Activated CD4-positive, alpha-beta T cell treated with anti-CD3 and anti-CD28 coated beads, Interleukin-2, amount 10 ng/mL, durations not matched to agents 7 days and 5 days (primary cell): ENCODE measurements at regions of chr12 and their contacts with region 1.

Region 1: DNA sequence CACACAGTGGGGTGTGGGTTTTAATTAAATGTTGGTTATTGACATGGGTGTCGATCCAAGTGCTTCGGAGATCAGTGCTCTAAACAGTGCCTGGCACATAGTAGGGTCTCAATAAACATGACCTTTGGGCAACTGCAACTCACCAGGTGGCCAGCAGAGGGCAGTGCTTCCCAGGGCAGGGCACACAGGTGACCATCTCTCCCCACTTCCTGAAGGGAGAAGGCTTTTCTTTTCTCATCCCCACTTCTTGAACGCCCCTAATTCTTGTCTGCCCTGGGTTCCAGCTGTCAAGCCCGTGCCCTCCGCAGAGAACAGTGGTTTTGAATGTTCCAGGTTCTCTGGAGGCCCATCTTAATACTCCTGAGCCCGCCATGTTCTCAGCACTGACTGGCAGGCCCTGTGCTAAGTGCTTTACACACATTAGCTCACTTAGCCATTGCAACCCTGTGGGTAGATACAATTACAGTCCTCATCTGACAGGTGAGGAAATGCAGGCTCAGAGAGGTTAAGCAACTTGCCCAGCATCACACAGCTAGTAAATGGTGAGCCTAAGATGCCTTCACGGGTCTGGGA is 16.3 kb downstream of the RAPGEF3 start:
- DNase-seq: peak; percentile 80
- H3K4me3 Mint-ChIP-seq: no peak overlapping the region
- H3K27ac Mint-ChIP-seq: no peak overlapping the region
- H3K4me1 Mint-ChIP-seq: peaks cover 17% of the 10 kb centered on the region
- H3K27me3 Mint-ChIP-seq: peaks cover 8% of the 10 kb centered on the region

Region 2: GRCh38 chr12:47725893-47726292 is 16.4 kb before region 1 on chr12:
- CTCF ChIA-PET with region 1: interaction called, 40 read pairs
- POLR2A ChIA-PET with region 1: no interaction called
- DNase-seq: no peak
- H3K4me3 Mint-ChIP-seq: no peak overlapping the region
- H3K27ac Mint-ChIP-seq: no peak overlapping the region
- H3K4me1 Mint-ChIP-seq: peaks cover 25% of the 10 kb centered on the region
- H3K27me3 Mint-ChIP-seq: no peaks in the 10 kb centered on the region

Region 3: GRCh38 chr12:47758834-47759690 is 16.7 kb after region 1 on chr12 and contains the start of gene RAPGEF3:
- CTCF ChIA-PET with region 1: interaction called, 162 read pairs
- POLR2A ChIA-PET with region 1: no interaction called
- DNase-seq: peak; percentile 71
- H3K4me3 Mint-ChIP-seq: peak within 1 kb of the TSS; percentile 72
- H3K27ac Mint-ChIP-seq: no peak within 1 kb of the TSS
- H3K4me1 Mint-ChIP-seq: peaks cover 28% of the 10 kb centered on the region
- H3K27me3 Mint-ChIP-seq: peaks cover 4% of the 10 kb centered on the region
- total RNA-seq, gene RAPGEF3: 0.15 TPM in 1 of 2 experiments, not detected in the other

Region 4: DNA sequence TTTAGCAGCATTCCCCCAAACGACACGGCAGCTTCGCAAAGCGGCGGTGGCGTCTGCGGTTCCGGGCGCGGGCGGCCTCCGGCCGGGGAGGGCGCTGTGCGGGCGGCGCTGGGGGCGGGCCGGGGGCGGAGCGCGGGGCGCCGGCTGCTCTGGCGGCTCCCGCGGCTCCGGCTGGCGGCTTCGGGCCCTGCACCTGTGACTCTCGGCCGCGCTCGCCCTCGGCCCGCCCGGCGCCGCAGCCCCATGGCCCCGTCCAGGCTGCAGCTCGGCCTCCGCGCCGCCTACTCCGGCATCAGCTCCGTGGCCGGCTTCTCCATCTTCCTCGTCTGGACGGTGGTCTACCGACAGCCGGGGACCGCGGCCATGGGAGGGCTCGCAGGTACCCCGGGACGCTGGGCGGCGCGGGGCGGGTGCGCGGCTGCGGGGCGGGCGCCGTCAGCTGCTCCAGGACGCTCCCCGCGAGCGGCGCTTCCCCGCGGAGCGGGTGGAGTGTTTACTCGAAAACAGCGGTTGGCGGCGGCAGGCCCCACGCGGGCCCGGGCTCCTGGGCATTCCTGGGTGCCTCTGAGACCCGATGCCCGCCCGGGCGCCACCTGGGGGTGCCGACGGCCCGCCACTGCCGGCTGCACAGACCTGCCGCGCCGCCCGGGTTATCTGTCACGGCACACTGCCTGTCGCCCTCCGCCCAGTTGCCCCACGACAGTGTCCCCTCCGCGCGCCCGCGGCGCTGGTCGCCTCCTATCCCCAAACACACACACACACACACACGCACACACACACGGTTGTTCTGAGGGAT is 30.9 kb after region 1 on chr12 and contains the start of gene SLC48A1:
- CTCF ChIA-PET with region 1: interaction called, 124 read pairs
- POLR2A ChIA-PET with region 1: no interaction called
- DNase-seq: peak; percentile 67
- H3K4me3 Mint-ChIP-seq: peak within 1 kb of the TSS; percentile 88
- H3K27ac Mint-ChIP-seq: peak within 1 kb of the TSS; percentile 80
- H3K4me1 Mint-ChIP-seq: peaks cover 40% of the 10 kb centered on the region
- H3K27me3 Mint-ChIP-seq: peaks cover 9% of the 10 kb centered on the region
- total RNA-seq, gene SLC48A1: 7.9 to 9.1 TPM

Region 5: GRCh38 chr12:47828608-47829536 is 86.5 kb after region 1 on chr12:
- CTCF ChIA-PET with region 1: interaction called, 36 read pairs
- POLR2A ChIA-PET with region 1: no interaction called
- DNase-seq: no peak
- H3K4me3 Mint-ChIP-seq: peak overlapping the region; percentile 28
- H3K27ac Mint-ChIP-seq: peak overlapping the region; percentile 77
- H3K4me1 Mint-ChIP-seq: peaks cover 92% of the 10 kb centered on the region
- H3K27me3 Mint-ChIP-seq: no peaks in the 10 kb centered on the region